ENCODE measurements at regions of chr6 and their contacts with region 1.

Region 1: GRCh38 chr6:52049252-52050050 is 38.0 kb downstream of the PKHD1 start:
- DNase-seq: peak; percentile 49
- H3K4me3 ChIP-seq: no peak overlapping the region
- H3K27ac ChIP-seq: no peak overlapping the region
- H3K4me1 ChIP-seq: no peaks in the 10 kb centered on the region
- H3K27me3 ChIP-seq: no peaks in the 10 kb centered on the region
- CTCF ChIP-seq: peak; percentile 39 to 49
- POLR2A ChIP-seq: no peak

Region 2: GRCh38 chr6:50128420-50129005 is 1920.9 kb before region 1 on chr6:
- CTCF ChIA-PET with region 1: interaction called, 19 read pairs
- POLR2A ChIA-PET with region 1: no interaction called
- dilution Hi-C with region 1: no loop called
- intact Hi-C with region 1: no loop called
- DNase-seq: peak; percentile 14
- H3K4me3 ChIP-seq: no peak overlapping the region
- H3K27ac ChIP-seq: no peak overlapping the region
- H3K4me1 ChIP-seq: no peaks in the 10 kb centered on the region
- H3K27me3 ChIP-seq: no peaks in the 10 kb centered on the region
- CTCF ChIP-seq: no peak
- POLR2A ChIP-seq: no peak

Region 3: GRCh38 chr6:50816115-50816675 is 1233.3 kb before region 1 on chr6:
- CTCF ChIA-PET with region 1: interaction called, 29 read pairs
- POLR2A ChIA-PET with region 1: no interaction called
- dilution Hi-C with region 1: no loop called
- intact Hi-C with region 1: no loop called
- DNase-seq: peak; percentile 71
- H3K4me3 ChIP-seq: peak overlapping the region; percentile 42 to 85 (median 74)
- H3K27ac ChIP-seq: no peak overlapping the region
- H3K4me1 ChIP-seq: no peaks in the 10 kb centered on the region
- H3K27me3 ChIP-seq: peaks cover 37 to 49% of the 10 kb centered on the region in 2 experiments
- CTCF ChIP-seq: peak; percentile 58 to 77
- POLR2A ChIP-seq: no peak

Region 4: DNA sequence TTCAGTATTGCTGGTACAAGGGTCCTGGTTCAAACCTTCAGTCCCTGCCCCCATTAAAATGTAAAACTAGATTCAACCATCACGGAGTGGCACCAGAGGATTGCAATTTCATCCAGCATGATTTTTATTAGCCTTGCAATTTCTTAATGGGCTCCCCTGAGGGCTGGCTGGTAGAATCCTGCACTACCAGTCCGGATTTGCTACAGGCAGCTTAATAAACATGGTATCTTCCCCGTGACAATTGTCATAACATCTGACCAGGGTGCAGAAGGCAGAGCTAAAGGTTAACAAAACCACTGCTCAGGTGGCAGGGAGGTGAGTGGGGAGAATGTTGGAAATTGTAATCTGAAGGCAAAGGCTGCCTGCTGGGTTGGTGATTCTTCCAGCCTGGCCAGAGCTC is 56.6 kb before region 1 on chr6:
- CTCF ChIA-PET with region 1: no interaction called
- POLR2A ChIA-PET with region 1: no interaction called
- dilution Hi-C with region 1: no loop called
- intact Hi-C with region 1: no loop called
- DNase-seq: no peak
- H3K4me3 ChIP-seq: no peak overlapping the region
- H3K27ac ChIP-seq: no peak overlapping the region
- H3K4me1 ChIP-seq: no peaks in the 10 kb centered on the region
- H3K27me3 ChIP-seq: no peaks in the 10 kb centered on the region
- CTCF ChIP-seq: no peak
- POLR2A ChIP-seq: no peak

Region 5: GRCh38 chr6:52020945-52021570 is 28.4 kb before region 1 on chr6:
- CTCF ChIA-PET with region 1: interaction called, 11 read pairs
- POLR2A ChIA-PET with region 1: no interaction called
- dilution Hi-C with region 1: no loop called
- intact Hi-C with region 1: no loop called
- DNase-seq: peak; percentile 33
- H3K4me3 ChIP-seq: no peak overlapping the region
- H3K27ac ChIP-seq: no peak overlapping the region
- H3K4me1 ChIP-seq: no peaks in the 10 kb centered on the region
- H3K27me3 ChIP-seq: no peaks in the 10 kb centered on the region
- CTCF ChIP-seq: peak in 1 of 2 donors; percentile 41
- POLR2A ChIP-seq: no peak

Region 6: GRCh38 chr6:52027699-52028098 is 21.8 kb before region 1 on chr6:
- CTCF ChIA-PET with region 1: interaction called, 16 read pairs
- POLR2A ChIA-PET with region 1: no interaction called
- dilution Hi-C with region 1: no loop called
- intact Hi-C with region 1: no loop called
- DNase-seq: no peak
- H3K4me3 ChIP-seq: no peak overlapping the region
- H3K27ac ChIP-seq: no peak overlapping the region
- H3K4me1 ChIP-seq: no peaks in the 10 kb centered on the region
- H3K27me3 ChIP-seq: no peaks in the 10 kb centered on the region
- CTCF ChIP-seq: no peak
- POLR2A ChIP-seq: no peak

Region 7: GRCh38 chr6:52063584-52064344 is 14.3 kb after region 1 on chr6:
- CTCF ChIA-PET with region 1: interaction called, 14 read pairs
- POLR2A ChIA-PET with region 1: no interaction called
- dilution Hi-C with region 1: no loop called
- intact Hi-C with region 1: no loop called
- DNase-seq: peak; percentile 17
- H3K4me3 ChIP-seq: no peak overlapping the region
- H3K27ac ChIP-seq: no peak overlapping the region
- H3K4me1 ChIP-seq: peaks cover 7% of the 10 kb centered on the region
- H3K27me3 ChIP-seq: no peaks in the 10 kb centered on the region
- CTCF ChIP-seq: peak; percentile 33 to 52
- POLR2A ChIP-seq: no peak

Measured in endothelial cell of umbilical vein (primary cell).